Psoas muscle (tissue), 8 donors: ENCODE measurements at regions of chr18 and their contacts with region 1.

Region 1: GRCh38 chr18:8704361-8705279 is 736 bp upstream of the MTCL1 start:
- DNase-seq: peak; percentile 91 to 94
- ATAC-seq: peak; percentile 93 to 96 (median 94)
- H3K4me3 ChIP-seq: peak overlapping the region; percentile 85
- H3K27ac ChIP-seq: peak overlapping the region; percentile 88
- H3K4me1 ChIP-seq: peaks cover 11% of the 10 kb centered on the region
- H3K27me3 ChIP-seq: peaks cover 0 to 7% (median 0%) of the 10 kb centered on the region in 3 donors
- CTCF ChIP-seq: no peak

Region 2: GRCh38 chr18:7696780-7697179 is 1007.8 kb before region 1 on chr18:
- intact Hi-C with region 1: no loop called
- DNase-seq: no peak
- ATAC-seq: no peak
- H3K4me3 ChIP-seq: no peak overlapping the region
- H3K27ac ChIP-seq: no peak overlapping the region
- H3K4me1 ChIP-seq: peaks cover 3% of the 10 kb centered on the region
- H3K27me3 ChIP-seq: no peaks in the 10 kb centered on the region
- CTCF ChIP-seq: no peak

Region 3: DNA sequence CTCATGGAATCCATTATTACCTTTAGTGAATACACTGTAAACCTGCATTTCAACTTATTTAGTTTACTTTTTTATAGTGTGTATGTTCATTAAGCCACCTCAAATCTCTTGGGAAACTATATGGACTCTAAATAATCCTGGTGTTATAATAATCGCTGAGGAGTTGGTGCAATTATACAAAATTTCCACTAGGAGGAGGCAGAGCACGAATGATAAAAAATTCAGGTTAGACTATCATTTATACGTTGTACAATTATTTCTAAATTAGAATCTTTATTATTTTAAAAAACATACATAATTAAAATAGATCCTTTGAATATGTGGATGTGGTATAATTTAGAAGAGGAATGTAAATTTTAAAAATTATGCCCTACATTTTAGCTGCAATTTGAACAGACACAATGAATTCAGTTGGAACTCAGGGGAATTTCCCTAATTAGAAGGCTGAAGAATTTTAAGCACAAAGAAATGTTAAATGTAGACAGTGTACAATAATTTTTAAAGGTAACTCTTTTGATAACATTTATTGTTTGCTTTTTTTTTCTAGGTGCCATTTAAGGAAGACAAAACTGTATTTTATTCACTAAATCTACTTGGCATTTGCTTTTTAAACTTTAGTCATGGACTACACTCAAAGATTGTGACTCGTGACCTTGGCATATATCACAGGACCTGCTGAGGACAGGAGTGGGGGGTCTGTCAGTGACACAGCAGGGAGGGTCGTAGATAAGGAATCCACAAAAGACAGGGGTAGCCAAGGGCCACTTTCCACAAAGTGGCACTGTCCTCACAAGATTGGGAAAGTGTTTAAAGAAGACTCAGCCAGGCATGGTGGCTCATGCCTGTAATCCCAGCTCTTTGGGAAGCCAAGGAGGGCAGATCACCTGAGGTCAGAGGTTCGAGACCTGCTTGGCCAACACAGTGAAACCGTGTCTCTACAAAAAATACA is 49.8 kb before region 1 on chr18:
- intact Hi-C with region 1: no loop called
- DNase-seq: no peak
- ATAC-seq: peak in 2 of 4 donors; percentile 48 to 71
- H3K4me3 ChIP-seq: no peak overlapping the region
- H3K27ac ChIP-seq: no peak overlapping the region
- H3K4me1 ChIP-seq: no peaks in the 10 kb centered on the region
- H3K27me3 ChIP-seq: no peaks in the 10 kb centered on the region
- CTCF ChIP-seq: peak; percentile 80

Region 4: DNA sequence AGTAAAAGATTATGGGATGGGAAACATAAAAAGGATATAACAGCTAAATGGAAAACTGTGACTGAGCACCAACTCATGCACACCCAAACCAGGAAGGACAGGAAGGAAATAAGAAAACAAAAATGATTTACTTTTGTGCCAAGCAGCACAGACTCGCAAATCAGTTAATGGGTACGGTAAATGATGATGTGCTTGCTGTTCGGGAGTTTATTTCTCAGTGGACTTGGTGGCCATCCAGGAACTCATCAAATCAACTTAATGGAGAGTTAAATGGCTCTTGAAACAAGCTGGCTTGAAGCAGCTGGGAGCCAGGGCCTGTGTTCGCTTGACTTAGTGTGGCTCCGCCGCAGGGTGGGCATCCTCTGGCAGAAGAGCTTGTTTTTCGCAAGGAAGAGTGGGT is 36.9 kb after region 1 on chr18:
- intact Hi-C with region 1: loop called in 1 of 2 experiments (anchors 2 kb)
- DNase-seq: no peak
- ATAC-seq: no peak
- H3K4me3 ChIP-seq: no peak overlapping the region
- H3K27ac ChIP-seq: no peak overlapping the region
- H3K4me1 ChIP-seq: peaks cover 6% of the 10 kb centered on the region
- H3K27me3 ChIP-seq: no peaks in the 10 kb centered on the region
- CTCF ChIP-seq: no peak

Region 5: GRCh38 chr18:8776013-8776943 is 71.7 kb after region 1 on chr18:
- intact Hi-C with region 1: no loop called
- DNase-seq: no peak
- ATAC-seq: no peak
- H3K4me3 ChIP-seq: no peak overlapping the region
- H3K27ac ChIP-seq: no peak overlapping the region
- H3K4me1 ChIP-seq: no peaks in the 10 kb centered on the region
- H3K27me3 ChIP-seq: no peaks in the 10 kb centered on the region
- CTCF ChIP-seq: no peak

Region 6: GRCh38 chr18:8835521-8835953 is 130.9 kb after region 1 on chr18:
- intact Hi-C with region 1: loop called in 1 of 2 experiments (anchors 10 kb)
- DNase-seq: peak; percentile 35 to 63
- ATAC-seq: peak; percentile 96 to 98 (median 96)
- H3K4me3 ChIP-seq: no peak overlapping the region
- H3K27ac ChIP-seq: peak overlapping the region; percentile 60
- H3K4me1 ChIP-seq: peaks cover 9% of the 10 kb centered on the region
- H3K27me3 ChIP-seq: no peaks in the 10 kb centered on the region
- CTCF ChIP-seq: no peak